ENCODE measurements at regions of chr2 and their contacts with region 1.

Region 1: GRCh38 chr2:218898109-218898878 is 17.6 kb downstream of the WNT10A start:
- DNase-seq: peak; percentile 50 to 88 (median 72)
- ATAC-seq: peak; percentile 42
- H3K4me3 ChIP-seq: peak overlapping the region; percentile 65
- H3K4me3 Mint-ChIP-seq: peak overlapping the region; percentile 53 to 87 (median 82)
- H3K27ac ChIP-seq: no peak overlapping the region
- H3K27ac Mint-ChIP-seq: peak overlapping the region in 7 of 9 donors; percentile 33 to 92 (median 71)
- H3K4me1 ChIP-seq: peaks cover 40 to 49% of the 10 kb centered on the region in 2 donors
- H3K4me1 Mint-ChIP-seq: peaks cover 38 to 48% (median 42%) of the 10 kb centered on the region in 7 donors
- H3K27me3 ChIP-seq: peaks cover 0 to 3% of the 10 kb centered on the region in 2 donors
- H3K27me3 Mint-ChIP-seq: peaks cover 20 to 75% (median 40%) of the 10 kb centered on the region in 5 donors

Region 2: DNA sequence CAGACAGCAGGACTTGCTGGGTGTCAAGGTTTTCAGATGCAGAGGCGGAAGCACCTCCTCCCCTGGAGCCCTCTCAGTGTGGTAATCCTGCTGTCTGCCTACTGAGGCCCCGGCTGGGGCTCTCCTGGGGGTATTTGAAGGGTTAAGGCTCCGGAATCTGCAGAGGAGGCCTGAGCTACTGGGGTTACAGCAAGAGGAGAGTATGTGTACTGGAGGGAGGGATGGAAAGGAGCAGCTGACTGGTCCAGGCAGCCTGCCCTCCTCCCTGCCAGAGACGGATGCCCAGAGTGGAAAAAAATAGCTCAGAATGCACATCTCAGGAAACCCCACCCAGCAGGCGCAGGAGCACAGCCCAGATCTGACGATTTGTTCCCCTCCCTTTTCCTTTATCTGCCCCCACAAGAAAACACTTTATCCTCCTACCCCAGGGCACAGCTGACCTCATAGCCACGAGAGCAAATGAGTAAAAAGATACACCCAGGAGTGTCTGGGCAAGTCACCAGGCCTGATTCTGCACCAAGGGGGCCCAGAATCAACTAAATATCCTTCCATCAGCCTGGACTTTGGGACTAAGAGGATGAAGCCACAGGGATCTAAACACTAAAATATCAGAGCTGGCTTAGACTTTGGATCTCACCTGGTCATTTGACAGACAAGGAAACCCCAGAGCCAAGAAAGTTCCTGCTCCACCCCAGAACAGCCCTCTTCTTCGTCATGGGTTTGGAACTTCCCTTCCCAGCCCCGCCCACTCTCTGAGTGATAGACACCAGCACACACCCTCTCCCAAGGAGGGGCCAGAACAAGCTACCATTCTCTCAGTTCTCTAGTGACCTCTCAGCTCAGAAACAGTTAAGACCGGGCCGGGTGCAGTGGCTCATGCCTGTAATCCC is 611.5 kb before region 1 on chr2:
- CTCF ChIA-PET with region 1: no interaction called
- POLR2A ChIA-PET with region 1: interaction called, 4 read pairs
- intact Hi-C with region 1: loop called (anchors 5 to 10 kb)
- DNase-seq: peak; percentile 53 to 90 (median 78)
- ATAC-seq: peak; percentile 87
- H3K4me3 ChIP-seq: peak overlapping the region; percentile 66
- H3K4me3 Mint-ChIP-seq: peak overlapping the region; percentile 85 to 97 (median 94)
- H3K27ac ChIP-seq: peak overlapping the region; percentile 93
- H3K27ac Mint-ChIP-seq: peak overlapping the region; percentile 95 to 99 (median 99)
- H3K4me1 ChIP-seq: peaks cover 74 to 77% of the 10 kb centered on the region in 2 donors
- H3K4me1 Mint-ChIP-seq: peaks cover 53 to 87% (median 76%) of the 10 kb centered on the region in 7 donors
- H3K27me3 ChIP-seq: no peaks in the 10 kb centered on the region
- H3K27me3 Mint-ChIP-seq: no peaks in the 10 kb centered on the region

Region 3: GRCh38 chr2:218885981-218886947 is 12.0 kb before region 1 on chr2:
- CTCF ChIA-PET with region 1: interaction called, 627 read pairs
- POLR2A ChIA-PET with region 1: interaction called, 305 read pairs
- intact Hi-C with region 1: no loop called
- DNase-seq: no peak
- ATAC-seq: no peak
- H3K4me3 ChIP-seq: no peak overlapping the region
- H3K4me3 Mint-ChIP-seq: no peak overlapping the region
- H3K27ac ChIP-seq: no peak overlapping the region
- H3K27ac Mint-ChIP-seq: peak overlapping the region in 5 of 9 donors; percentile 26 to 75 (median 32)
- H3K4me1 ChIP-seq: peaks cover 10 to 19% of the 10 kb centered on the region in 2 donors
- H3K4me1 Mint-ChIP-seq: peaks cover 4 to 38% (median 32%) of the 10 kb centered on the region in 7 donors
- H3K27me3 ChIP-seq: no peaks in the 10 kb centered on the region
- H3K27me3 Mint-ChIP-seq: peaks cover 0 to 86% (median 0%) of the 10 kb centered on the region in 5 donors

Region 4: DNA sequence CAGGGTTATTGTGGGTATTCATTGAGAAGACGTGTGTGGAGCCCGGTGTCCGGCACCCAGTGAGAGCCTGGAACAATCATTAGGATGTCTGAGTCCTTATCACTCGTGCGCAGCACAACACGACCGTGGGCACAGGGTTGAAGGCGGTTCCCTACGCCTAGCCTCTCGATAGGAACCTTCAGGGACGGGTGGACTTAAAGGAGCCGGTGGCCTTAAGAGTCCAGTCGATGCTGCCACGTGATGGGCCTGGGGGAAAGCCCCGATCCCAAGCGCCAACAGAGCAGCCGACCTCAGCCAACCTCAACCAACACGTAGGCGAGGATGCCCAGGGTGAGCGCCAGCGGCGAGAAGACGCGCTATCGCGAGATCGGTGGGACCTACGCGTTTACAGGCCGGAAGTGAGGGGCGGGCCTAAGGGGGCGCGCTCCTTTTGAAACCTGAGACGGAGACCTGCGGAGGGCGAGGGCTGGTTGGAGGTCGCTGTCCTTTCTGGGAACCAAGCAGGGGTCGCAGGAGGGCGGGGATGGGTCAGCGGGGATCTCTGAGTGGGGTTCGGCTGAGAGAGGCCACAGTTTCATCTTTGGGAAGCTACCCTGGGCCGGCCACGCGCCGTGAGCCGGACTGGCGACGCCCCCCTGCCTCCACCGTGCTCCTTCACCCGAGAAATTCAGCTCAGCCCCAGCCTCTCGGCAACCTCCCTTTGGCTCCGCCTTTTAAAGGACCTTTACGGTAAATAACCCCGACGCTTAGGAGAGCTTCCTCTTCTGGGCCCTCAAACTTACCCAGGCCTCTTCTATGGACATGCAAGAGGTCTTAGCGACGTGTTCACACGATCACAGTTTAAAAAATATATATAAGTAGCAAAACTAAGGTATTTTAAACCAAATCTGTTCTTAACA is 10.7 kb after region 1 on chr2:
- CTCF ChIA-PET with region 1: interaction called, 10 read pairs
- POLR2A ChIA-PET with region 1: interaction called, 3 read pairs
- intact Hi-C with region 1: loop called in 1 of 2 experiments (anchors 1 kb)
- DNase-seq: peak; percentile 78 to 89 (median 86)
- ATAC-seq: peak; percentile 98
- H3K4me3 ChIP-seq: peak overlapping the region; percentile 65
- H3K4me3 Mint-ChIP-seq: peak overlapping the region; percentile 82 to 94 (median 86)
- H3K27ac ChIP-seq: peak overlapping the region; percentile 53
- H3K27ac Mint-ChIP-seq: peak overlapping the region in 8 of 9 donors; percentile 10 to 88 (median 80)
- H3K4me1 ChIP-seq: peaks cover 10 to 12% of the 10 kb centered on the region in 2 donors
- H3K4me1 Mint-ChIP-seq: peaks cover 0 to 12% (median 6%) of the 10 kb centered on the region in 7 donors
- H3K27me3 ChIP-seq: no peaks in the 10 kb centered on the region
- H3K27me3 Mint-ChIP-seq: peaks cover 14 to 38% (median 16%) of the 10 kb centered on the region in 5 donors

Region 5: DNA sequence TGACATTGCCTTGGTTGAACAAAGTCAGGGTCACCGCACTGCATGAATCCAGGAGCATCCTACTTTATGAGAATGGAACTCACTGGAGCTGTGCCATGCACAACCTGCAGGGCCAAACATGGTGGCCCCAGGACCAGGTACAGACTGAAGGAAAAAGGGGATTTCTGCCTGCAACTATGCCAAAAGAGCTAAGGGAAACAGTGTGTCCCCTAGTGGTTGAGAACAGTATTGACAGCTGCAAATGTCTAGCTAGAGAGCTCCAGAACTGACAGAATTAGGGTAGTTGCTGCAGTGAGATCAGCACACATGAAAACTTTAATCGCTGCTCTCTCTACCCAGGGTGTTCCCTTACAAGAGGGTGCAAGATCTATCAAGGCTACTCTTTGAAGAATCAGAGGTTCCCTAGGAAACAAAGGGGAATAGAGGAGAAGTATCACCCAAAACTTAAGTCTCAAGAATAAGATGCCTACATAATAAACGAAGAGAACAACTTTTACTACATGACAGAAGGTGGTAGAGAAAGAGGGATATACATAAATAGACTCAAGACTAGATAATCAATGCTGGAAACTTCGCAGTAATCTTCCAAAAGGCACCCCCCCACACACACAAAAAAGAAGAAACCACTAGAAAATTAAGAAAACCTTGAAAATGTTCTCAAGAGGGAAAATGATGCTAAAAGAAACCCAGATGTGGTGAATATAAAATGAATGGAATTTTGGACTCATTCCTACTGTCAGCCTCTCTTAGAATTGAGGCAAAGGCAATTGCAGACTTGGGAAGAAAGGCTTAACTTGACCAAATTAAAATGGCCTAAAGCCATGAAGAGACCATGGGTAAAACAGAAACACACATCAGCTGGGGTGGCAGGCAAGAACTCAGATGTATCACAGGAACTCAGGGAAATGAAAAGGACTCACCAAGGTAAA is 206.1 kb after region 1 on chr2:
- CTCF ChIA-PET with region 1: no interaction called
- POLR2A ChIA-PET with region 1: no interaction called
- intact Hi-C with region 1: no loop called
- DNase-seq: peak in 2 of 9 donors; percentile 2 to 3
- ATAC-seq: peak; percentile 79
- H3K4me3 ChIP-seq: no peak overlapping the region
- H3K4me3 Mint-ChIP-seq: no peak overlapping the region
- H3K27ac ChIP-seq: no peak overlapping the region
- H3K27ac Mint-ChIP-seq: peak overlapping the region in 1 of 9 donors; percentile 14
- H3K4me1 ChIP-seq: no peaks in the 10 kb centered on the region
- H3K4me1 Mint-ChIP-seq: peaks cover 11 to 36% (median 24%) of the 10 kb centered on the region in 7 donors
- H3K27me3 ChIP-seq: no peaks in the 10 kb centered on the region
- H3K27me3 Mint-ChIP-seq: no peaks in the 10 kb centered on the region

Measured in naive thymus-derived CD4-positive, alpha-beta T cell (primary cell).